ENCODE measurements at regions of chr20 and their contacts with region 1.

Region 1: GRCh38 chr20:2387180-2387577 is 6.5 kb downstream of the TGM6 start:
- DNase-seq: peak; percentile 60
- CTCF ChIP-seq: peak; percentile 40

Region 2: GRCh38 chr20:2206957-2207769 is 180.0 kb before region 1 on chr20:
- CTCF ChIA-PET with region 1: interaction called, 12 read pairs
- POLR2A ChIA-PET with region 1: no interaction called
- DNase-seq: peak; percentile 86
- CTCF ChIP-seq: peak; percentile 77

Region 3: GRCh38 chr20:2279253-2279779 is 107.9 kb before region 1 on chr20:
- CTCF ChIA-PET with region 1: no interaction called
- POLR2A ChIA-PET with region 1: no interaction called
- DNase-seq: no peak
- CTCF ChIP-seq: no peak

Region 4: DNA sequence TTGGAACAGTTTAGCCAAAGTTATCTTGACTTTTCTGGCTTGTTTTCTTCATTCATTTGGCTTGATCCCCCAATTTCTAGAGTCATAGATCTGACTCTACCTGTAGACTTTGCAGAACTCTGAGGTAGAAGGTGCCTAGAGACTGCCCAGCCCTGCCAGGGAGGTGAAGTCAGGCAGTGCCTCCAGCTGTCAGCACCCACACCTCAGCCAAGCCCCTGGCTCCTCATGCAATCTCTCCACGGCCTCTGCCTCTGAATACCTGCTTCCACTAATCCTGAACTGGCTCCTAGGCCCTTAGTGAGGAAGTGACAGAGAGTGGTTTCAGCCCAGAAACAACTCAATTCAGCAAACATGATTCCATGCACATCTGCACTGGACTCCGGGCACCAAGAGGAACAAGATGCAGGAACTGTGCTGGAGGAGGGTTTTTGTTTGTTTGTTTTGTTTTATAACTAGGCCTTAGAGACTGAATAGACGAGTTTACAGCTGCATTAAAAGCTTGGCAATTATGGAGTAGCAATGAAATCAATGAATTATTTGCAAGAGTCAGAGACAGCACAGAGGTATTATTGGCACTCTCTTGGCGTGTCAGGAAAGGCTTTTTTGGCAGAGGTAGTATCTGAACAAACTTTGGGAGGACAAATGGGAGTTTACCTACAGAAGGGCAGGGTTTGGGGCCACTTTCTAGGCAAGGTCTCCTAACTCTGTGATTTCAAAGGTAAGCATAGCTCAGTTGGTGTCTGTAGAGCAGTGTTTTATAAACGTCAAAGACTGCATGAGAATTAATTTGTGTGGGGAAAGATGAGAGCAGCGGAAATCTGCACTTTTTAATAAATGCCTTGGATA is 66.1 kb before region 1 on chr20:
- CTCF ChIA-PET with region 1: no interaction called
- POLR2A ChIA-PET with region 1: no interaction called
- DNase-seq: no peak
- CTCF ChIP-seq: no peak

Region 5: DNA sequence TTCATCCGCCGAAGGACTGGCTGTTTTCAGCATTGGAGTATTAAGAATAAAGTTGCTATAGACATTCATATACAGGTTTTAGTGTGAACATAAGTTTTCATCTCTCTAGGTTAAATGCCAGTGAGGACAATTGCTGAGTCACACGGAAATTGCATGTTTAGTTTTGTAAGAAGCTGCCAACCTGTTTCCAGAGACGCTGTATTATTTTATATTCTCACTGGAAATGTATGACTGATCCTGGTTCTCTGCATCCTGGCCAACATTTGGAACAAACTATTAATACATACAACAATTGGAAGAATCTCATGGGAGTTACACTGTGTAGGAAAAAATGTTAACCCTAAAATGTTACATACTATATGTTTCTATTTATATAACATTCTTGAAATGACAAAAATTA is 23.1 kb before region 1 on chr20:
- CTCF ChIA-PET with region 1: interaction called, 13 read pairs
- POLR2A ChIA-PET with region 1: no interaction called
- DNase-seq: no peak
- CTCF ChIP-seq: no peak

Region 6: GRCh38 chr20:2374346-2375125 is 12.6 kb before region 1 on chr20:
- CTCF ChIA-PET with region 1: interaction called, 23 read pairs
- POLR2A ChIA-PET with region 1: no interaction called
- DNase-seq: no peak
- CTCF ChIP-seq: no peak

Region 7: GRCh38 chr20:2402271-2402980 is 15.2 kb after region 1 on chr20:
- CTCF ChIA-PET with region 1: interaction called, 18 read pairs
- POLR2A ChIA-PET with region 1: no interaction called
- DNase-seq: peak; percentile 26
- CTCF ChIP-seq: peak; percentile 9

Region 8: DNA sequence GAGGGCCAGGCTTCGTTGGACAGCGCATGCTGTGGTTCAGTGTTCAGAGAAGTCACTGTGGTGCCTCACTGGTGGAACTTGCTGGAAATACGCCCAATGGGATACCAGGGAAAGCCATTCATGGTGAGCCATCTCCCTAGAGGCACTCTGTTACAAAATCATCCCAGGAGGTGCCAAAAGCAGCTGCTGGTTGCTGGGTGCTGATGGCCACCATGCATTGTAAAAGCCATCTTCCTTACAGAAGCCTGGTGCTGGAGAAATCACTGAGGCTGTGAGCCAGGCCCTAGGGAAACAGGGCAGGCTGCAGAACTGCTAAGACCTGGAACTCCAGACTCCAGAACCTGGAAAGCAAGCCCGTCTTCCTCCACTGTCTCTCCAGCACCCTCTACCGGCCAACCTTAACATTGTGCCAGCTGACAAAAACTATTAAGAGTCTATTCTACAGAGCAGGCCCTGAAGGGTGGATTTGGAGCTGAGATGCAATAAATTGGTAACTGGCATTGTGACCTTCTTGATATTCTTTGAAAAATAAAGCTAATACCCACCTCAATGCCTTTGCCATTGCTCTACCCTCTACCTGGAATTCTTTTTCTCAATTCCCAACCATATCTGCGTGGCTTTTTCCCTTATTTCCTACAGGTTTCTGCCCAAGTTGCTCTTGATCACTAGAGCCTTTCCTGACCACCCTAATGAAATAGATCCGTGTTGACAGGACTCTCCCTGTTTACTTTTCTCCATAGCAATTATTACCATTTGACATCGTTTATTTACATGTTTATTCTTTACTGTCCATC is 65.0 kb after region 1 on chr20:
- CTCF ChIA-PET with region 1: interaction called, 29 read pairs
- POLR2A ChIA-PET with region 1: no interaction called
- DNase-seq: peak; percentile 62
- CTCF ChIP-seq: peak; percentile 79

Measured in GM10248 (cell line).